Activated B cell treated with CpG ODN at 0.5 μM for 24 hours (primary cell): ENCODE measurements at regions of chr4 and their contacts with region 1.

Region 1: DNA sequence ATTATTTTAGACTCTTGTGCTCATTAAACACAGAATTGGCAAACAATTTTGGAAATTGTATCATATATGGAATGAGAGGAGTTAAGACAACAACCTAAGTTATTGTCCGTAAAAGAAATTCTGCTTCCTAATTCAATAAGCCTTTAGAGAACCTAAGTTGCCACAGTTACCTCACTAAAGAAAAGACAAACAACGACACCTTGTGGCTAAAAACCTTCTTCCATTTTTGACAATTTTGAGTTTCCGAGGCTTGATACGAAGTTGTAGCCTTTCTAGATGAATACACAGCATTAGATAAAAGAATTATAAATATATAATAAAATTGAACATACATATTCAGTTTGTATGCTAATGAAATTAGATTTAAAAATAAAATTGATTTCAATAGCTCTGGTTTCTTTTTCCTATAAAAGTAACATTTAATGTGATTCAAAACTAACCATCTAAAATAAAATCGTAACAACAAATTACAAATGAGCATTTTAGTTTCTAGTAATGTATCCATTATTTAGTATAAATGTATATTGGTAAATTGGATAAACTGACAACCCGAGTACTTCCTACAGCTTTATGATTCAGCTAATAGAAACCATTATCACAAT is 275.1 kb downstream of the GPM6A start:
- DNase-seq: no peak
- ATAC-seq: no peak
- H3K4me3 Mint-ChIP-seq: no peak overlapping the region
- H3K27ac Mint-ChIP-seq: no peak overlapping the region
- H3K4me1 Mint-ChIP-seq: no peaks in the 10 kb centered on the region
- H3K27me3 Mint-ChIP-seq: no peaks in the 10 kb centered on the region
- CTCF ChIP-seq: no peak

Region 2: DNA sequence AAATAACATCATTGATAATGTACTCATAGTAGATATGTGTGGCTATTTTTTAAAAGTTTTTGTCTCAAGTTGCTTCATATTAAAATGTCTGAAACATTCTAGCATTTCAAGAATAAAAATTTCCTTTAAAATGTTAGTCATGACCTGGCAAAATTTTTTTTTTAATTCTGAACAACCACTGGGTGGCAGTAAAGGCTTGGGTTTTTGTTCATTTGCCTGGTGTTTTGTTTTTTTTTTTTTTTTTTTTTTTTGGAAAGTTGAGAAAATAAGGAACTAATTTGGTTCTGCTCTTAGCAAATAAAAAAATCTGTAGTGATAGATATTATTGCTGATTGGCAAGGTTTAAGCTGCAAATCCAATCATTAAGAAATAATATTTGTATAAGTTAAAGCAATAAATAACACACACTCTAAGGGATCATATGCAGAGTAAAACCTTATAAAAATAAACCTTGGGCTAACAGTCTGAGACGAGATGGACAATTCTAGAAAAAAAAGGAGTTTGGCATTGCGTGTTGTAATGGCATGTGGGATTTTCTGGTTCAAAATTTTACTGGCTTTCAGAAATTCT is 1171.8 kb before region 1 on chr4:
- CTCF ChIA-PET with region 1: no interaction called
- POLR2A ChIA-PET with region 1: no interaction called
- intact Hi-C with region 1: loop called (anchors 1 kb)
- DNase-seq: no peak
- ATAC-seq: no peak
- H3K4me3 Mint-ChIP-seq: no peak overlapping the region
- H3K27ac Mint-ChIP-seq: no peak overlapping the region
- H3K4me1 Mint-ChIP-seq: no peaks in the 10 kb centered on the region
- H3K27me3 Mint-ChIP-seq: no peaks in the 10 kb centered on the region
- CTCF ChIP-seq: no peak

Region 3: GRCh38 chr4:174764105-174764729 is 772.7 kb before region 1 on chr4:
- CTCF ChIA-PET with region 1: no interaction called
- POLR2A ChIA-PET with region 1: no interaction called
- intact Hi-C with region 1: loop called (anchors 1 kb)
- DNase-seq: no peak
- ATAC-seq: peak; percentile 25
- H3K4me3 Mint-ChIP-seq: no peak overlapping the region
- H3K27ac Mint-ChIP-seq: no peak overlapping the region
- H3K4me1 Mint-ChIP-seq: peaks cover 9% of the 10 kb centered on the region
- H3K27me3 Mint-ChIP-seq: no peaks in the 10 kb centered on the region
- CTCF ChIP-seq: no peak

Region 4: GRCh38 chr4:174828845-174829701 is 707.9 kb before region 1 on chr4 and contains the start of gene GLRA3:
- CTCF ChIA-PET with region 1: no interaction called
- POLR2A ChIA-PET with region 1: no interaction called
- intact Hi-C with region 1: loop called (anchors 5 kb)
- DNase-seq: peak; percentile 35
- ATAC-seq: peak; percentile 92
- H3K4me3 Mint-ChIP-seq: peak within 1 kb of the TSS; percentile 79
- H3K27ac Mint-ChIP-seq: peak within 1 kb of the TSS; percentile 48
- H3K4me1 Mint-ChIP-seq: peaks cover 5% of the 10 kb centered on the region
- H3K27me3 Mint-ChIP-seq: peaks cover 7% of the 10 kb centered on the region
- CTCF ChIP-seq: no peak
- total RNA-seq, gene GLRA3: 0.12 and 0.22 TPM in 2 replicates